Calu3 (cell line): ENCODE measurements at regions of chr20 and their contacts with region 1.

Region 1: GRCh38 chr20:43187476-43188233 is 2.1 kb downstream of the PTPRT start:
- DNase-seq: peak; percentile 89
- H3K4me3 Mint-ChIP-seq: no peak overlapping the region
- H3K27ac Mint-ChIP-seq: peak overlapping the region; percentile 13
- H3K4me1 Mint-ChIP-seq: peaks cover 8% of the 10 kb centered on the region
- H3K27me3 Mint-ChIP-seq: peaks cover 93% of the 10 kb centered on the region
- CTCF ChIP-seq: peak; percentile 98

Region 2: GRCh38 chr20:41738604-41739206 is 1449.0 kb before region 1 on chr20:
- CTCF ChIA-PET with region 1: interaction called, 5 read pairs
- intact Hi-C with region 1: loop called (anchors 1 kb)
- DNase-seq: peak; percentile 81
- H3K4me3 Mint-ChIP-seq: no peak overlapping the region
- H3K27ac Mint-ChIP-seq: no peak overlapping the region
- H3K4me1 Mint-ChIP-seq: no peaks in the 10 kb centered on the region
- H3K27me3 Mint-ChIP-seq: peaks cover 21% of the 10 kb centered on the region
- CTCF ChIP-seq: peak; percentile 95

Region 3: DNA sequence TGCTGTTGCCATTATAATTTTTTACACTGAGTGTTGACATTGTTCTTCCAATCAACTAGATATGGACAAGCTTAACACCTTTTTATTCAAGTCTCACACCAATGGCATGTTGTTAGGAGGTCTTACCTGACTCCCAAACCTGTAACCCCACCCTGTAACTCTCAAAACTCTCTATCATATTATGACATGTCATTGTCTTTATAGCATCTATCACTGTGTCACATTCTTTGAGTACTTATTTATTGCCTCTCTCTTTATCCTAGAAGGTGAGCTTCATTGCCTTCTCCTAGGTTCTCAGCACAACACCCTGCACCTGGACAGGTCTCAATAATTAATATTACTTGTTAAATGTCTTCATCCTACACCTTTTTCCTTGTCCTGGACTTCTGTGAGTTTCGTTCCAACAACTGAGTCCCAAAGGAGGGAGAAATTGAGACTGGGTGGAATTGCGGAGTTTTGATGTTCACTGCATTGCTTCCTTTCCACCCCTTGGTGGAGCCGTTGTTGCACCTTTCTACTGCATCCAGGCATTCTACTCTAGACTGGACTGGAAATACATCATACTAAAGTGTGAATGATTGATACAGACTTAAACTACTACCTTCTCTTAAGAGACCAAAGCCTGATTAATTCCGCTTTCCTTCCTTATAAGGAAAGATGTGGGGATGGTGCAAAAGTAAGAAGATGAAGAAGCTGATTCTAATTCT is 1231.5 kb before region 1 on chr20:
- CTCF ChIA-PET with region 1: no interaction called
- intact Hi-C with region 1: loop called (anchors 1 kb)
- DNase-seq: peak; percentile 18
- H3K4me3 Mint-ChIP-seq: no peak overlapping the region
- H3K27ac Mint-ChIP-seq: no peak overlapping the region
- H3K4me1 Mint-ChIP-seq: no peaks in the 10 kb centered on the region
- H3K27me3 Mint-ChIP-seq: peaks cover 38% of the 10 kb centered on the region
- CTCF ChIP-seq: peak; percentile 23

Region 4: GRCh38 chr20:42204203-42204942 is 983.3 kb before region 1 on chr20:
- CTCF ChIA-PET with region 1: no interaction called
- intact Hi-C with region 1: loop called (anchors 1 kb)
- DNase-seq: no peak
- H3K4me3 Mint-ChIP-seq: no peak overlapping the region
- H3K27ac Mint-ChIP-seq: no peak overlapping the region
- H3K4me1 Mint-ChIP-seq: no peaks in the 10 kb centered on the region
- H3K27me3 Mint-ChIP-seq: no peaks in the 10 kb centered on the region
- CTCF ChIP-seq: no peak

Region 5: DNA sequence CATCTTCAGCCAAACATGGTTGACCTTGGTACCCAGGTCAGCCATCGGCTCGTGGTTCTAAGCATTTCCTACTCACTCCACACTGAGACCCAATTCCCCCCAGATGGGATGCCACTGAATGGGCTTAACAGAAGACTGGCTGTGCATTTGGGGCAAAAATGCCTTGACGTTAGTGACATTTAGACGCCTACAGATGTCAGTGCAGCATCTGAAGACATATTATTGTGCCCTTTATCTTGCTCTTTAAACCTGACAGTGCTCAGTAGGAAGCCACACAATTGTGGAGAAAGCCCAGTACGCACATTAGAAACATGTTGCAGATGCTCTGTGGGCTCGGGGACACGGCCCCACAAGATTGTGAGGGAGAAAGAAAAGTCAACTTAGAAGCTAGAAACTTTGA is 412.6 kb before region 1 on chr20:
- CTCF ChIA-PET with region 1: no interaction called
- intact Hi-C with region 1: loop called (anchors 2 kb)
- DNase-seq: no peak
- H3K4me3 Mint-ChIP-seq: no peak overlapping the region
- H3K27ac Mint-ChIP-seq: no peak overlapping the region
- H3K4me1 Mint-ChIP-seq: no peaks in the 10 kb centered on the region
- H3K27me3 Mint-ChIP-seq: peaks cover 66% of the 10 kb centered on the region
- CTCF ChIP-seq: no peak

Region 6: DNA sequence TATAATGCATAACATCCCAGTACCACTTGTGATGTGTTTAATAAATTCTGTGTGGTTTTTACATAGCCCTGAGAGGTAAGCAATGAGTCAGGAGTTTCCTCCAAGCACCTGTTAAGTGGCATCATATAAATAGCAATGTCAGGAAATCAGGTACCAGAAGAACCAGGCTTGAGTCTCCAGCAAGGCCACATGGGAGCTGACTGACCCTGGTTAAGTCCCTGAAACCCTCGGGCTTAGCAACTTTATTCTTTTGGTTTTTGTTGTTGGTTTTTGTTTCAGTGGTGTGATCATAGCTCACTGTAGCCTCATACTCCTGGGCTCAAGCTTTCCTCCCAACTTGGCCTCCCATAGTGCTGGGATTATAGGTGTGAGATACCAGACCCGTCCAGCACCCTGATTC is 67.9 kb before region 1 on chr20:
- CTCF ChIA-PET with region 1: no interaction called
- intact Hi-C with region 1: loop called (anchors 5 kb)
- DNase-seq: no peak
- H3K4me3 Mint-ChIP-seq: no peak overlapping the region
- H3K27ac Mint-ChIP-seq: no peak overlapping the region
- H3K4me1 Mint-ChIP-seq: no peaks in the 10 kb centered on the region
- H3K27me3 Mint-ChIP-seq: peaks cover 34% of the 10 kb centered on the region
- CTCF ChIP-seq: no peak